ENCODE measurements at regions of chr12 and their contacts with region 1.

Region 1: GRCh38 chr12:39145175-39145999 is 240.0 kb upstream of the CPNE8 start:
- DNase-seq: no peak
- H3K4me3 ChIP-seq: peak overlapping the region; percentile 33 to 57 (median 47)
- H3K27ac ChIP-seq: no peak overlapping the region
- H3K4me1 ChIP-seq: peaks cover 3% of the 10 kb centered on the region
- H3K27me3 ChIP-seq: peaks cover 17 to 23% of the 10 kb centered on the region in 2 experiments
- CTCF ChIP-seq: peak in 1 of 2 donors; percentile 51
- POLR2A ChIP-seq: no peak

Region 2: DNA sequence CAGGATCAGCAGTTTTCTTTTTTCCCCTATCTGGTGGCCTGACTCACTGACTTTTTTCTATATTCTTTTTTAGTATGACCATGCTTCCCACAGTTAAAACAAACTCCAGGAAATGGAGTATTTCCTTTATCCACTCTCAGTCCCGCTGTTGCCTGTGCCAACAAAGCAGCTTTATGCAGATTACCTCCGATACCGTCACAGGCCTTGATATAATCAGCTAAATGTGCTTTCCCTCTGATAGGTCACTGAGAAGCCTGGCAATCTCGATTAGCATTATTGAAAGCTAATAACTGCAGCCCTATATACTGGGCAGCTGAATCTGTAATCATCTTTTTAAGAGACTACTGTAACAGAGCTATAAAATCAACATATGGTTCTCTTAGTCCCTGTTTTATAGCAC is 54.0 kb after region 1 on chr12:
- CTCF ChIA-PET with region 1: no interaction called
- POLR2A ChIA-PET with region 1: no interaction called
- dilution Hi-C with region 1: no loop called
- intact Hi-C with region 1: loop called (anchors 10 kb)
- DNase-seq: peak; percentile 88
- H3K4me3 ChIP-seq: no peak overlapping the region
- H3K27ac ChIP-seq: no peak overlapping the region
- H3K4me1 ChIP-seq: peaks cover 8% of the 10 kb centered on the region
- H3K27me3 ChIP-seq: peaks cover 3 to 5% of the 10 kb centered on the region in 2 experiments
- CTCF ChIP-seq: no peak
- POLR2A ChIP-seq: no peak

Region 3: DNA sequence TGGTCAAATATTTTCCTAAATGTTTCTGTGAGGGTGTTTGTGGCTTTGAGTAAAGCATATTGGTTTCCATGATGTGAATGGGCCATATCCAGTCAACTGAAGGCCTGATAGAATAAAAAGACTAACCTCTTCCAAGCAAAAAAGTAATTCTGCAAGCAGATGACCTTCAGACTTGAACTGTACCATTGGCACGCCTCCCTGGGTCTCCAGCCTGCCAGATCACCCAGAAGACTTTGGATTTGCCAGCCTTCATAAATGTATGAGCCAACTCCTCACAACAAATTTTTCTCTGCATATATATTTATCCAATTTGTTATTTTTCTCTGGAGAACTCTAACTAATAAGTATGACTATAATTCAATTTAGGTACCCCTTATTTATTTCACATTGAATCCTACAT is 107.2 kb after region 1 on chr12:
- CTCF ChIA-PET with region 1: no interaction called
- POLR2A ChIA-PET with region 1: no interaction called
- dilution Hi-C with region 1: no loop called
- intact Hi-C with region 1: loop called (anchors 5 kb)
- DNase-seq: no peak
- H3K4me3 ChIP-seq: no peak overlapping the region
- H3K27ac ChIP-seq: no peak overlapping the region
- H3K4me1 ChIP-seq: no peaks in the 10 kb centered on the region
- H3K27me3 ChIP-seq: no peaks in the 10 kb centered on the region
- CTCF ChIP-seq: no peak
- POLR2A ChIP-seq: no peak

Measured in endothelial cell of umbilical vein (primary cell).